ENCODE measurements at regions of chr16 and their contacts with region 1.

Region 1: DNA sequence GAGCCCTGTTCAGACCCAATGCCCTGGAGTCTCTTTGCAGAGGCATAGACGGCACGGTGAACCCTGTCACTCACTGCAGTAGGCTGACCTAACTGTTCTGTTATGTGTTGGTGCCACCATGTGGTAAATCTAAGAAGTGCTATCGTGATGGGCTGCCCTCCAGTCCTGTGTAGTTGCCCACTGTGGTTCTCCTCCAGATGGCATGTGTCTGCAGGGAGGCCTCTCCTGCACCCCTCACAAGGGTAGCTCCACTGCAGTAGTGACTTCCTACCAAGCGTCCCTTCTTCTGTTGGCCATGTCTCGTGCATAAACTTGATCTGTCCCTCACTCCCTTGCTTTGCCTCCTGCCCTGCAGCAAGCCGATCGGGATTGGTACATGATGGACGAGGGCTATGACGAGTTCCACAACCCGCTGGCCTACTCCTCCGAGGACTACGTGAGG is 5.8 kb downstream of the DHX38 start:
- DNase-seq: peak; percentile 19 to 77
- H3K4me3 ChIP-seq: no peak overlapping the region
- H3K27ac ChIP-seq: no peak overlapping the region
- H3K4me1 ChIP-seq: no peaks in the 10 kb centered on the region
- H3K27me3 ChIP-seq: no peaks in the 10 kb centered on the region
- CTCF ChIP-seq: peak; percentile 61 to 86 (median 83)
- EP300 ChIP-seq: no peak
- POLR2A ChIP-seq: no peak
- RAD21 ChIP-seq: peak; percentile 85 to 88

Region 2: DNA sequence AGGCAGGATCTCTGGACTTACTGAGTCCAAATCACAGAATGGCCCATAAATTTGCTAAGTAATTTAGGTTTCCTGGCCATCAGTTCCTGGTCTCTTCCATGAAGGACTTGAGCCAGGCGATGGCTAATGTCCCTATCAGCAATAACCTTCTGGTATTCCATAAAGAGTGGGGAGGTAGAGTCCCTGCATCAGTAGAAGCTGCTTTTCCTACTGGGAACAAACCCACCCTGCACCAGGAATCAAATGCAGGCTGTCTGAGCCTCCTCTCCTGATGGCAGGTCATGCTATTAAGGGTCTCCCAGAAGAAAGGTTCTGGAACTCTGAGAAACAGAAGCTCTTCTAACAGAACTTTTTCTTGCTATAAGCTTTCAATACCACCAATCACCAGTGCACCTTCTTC is 37.8 kb before region 1 on chr16:
- CTCF ChIA-PET with region 1: interaction called, 108 read pairs
- POLR2A ChIA-PET with region 1: interaction called, 3 read pairs
- DNase-seq: no peak
- H3K4me3 ChIP-seq: no peak overlapping the region
- H3K27ac ChIP-seq: no peak overlapping the region
- H3K4me1 ChIP-seq: no peaks in the 10 kb centered on the region
- H3K27me3 ChIP-seq: no peaks in the 10 kb centered on the region
- CTCF ChIP-seq: no peak
- EP300 ChIP-seq: no peak
- POLR2A ChIP-seq: no peak
- RAD21 ChIP-seq: no peak

Region 3: GRCh38 chr16:72072514-72073342 is 26.7 kb before region 1 on chr16:
- CTCF ChIA-PET with region 1: interaction called, 108 read pairs
- POLR2A ChIA-PET with region 1: interaction called, 23 read pairs
- DNase-seq: no peak
- H3K4me3 ChIP-seq: no peak overlapping the region
- H3K27ac ChIP-seq: peak overlapping the region; percentile 68
- H3K4me1 ChIP-seq: peaks cover 0 to 9% (median 2%) of the 10 kb centered on the region in 4 experiments; a peak in 2 of 7 replicates
- H3K27me3 ChIP-seq: no peaks in the 10 kb centered on the region
- CTCF ChIP-seq: no peak
- EP300 ChIP-seq: no peak
- POLR2A ChIP-seq: peak; percentile 45 to 67
- RAD21 ChIP-seq: no peak

Measured in H1 (cell line).